A673 (cell line): ENCODE measurements at regions of chr19 and their contacts with region 1.

Region 1: DNA sequence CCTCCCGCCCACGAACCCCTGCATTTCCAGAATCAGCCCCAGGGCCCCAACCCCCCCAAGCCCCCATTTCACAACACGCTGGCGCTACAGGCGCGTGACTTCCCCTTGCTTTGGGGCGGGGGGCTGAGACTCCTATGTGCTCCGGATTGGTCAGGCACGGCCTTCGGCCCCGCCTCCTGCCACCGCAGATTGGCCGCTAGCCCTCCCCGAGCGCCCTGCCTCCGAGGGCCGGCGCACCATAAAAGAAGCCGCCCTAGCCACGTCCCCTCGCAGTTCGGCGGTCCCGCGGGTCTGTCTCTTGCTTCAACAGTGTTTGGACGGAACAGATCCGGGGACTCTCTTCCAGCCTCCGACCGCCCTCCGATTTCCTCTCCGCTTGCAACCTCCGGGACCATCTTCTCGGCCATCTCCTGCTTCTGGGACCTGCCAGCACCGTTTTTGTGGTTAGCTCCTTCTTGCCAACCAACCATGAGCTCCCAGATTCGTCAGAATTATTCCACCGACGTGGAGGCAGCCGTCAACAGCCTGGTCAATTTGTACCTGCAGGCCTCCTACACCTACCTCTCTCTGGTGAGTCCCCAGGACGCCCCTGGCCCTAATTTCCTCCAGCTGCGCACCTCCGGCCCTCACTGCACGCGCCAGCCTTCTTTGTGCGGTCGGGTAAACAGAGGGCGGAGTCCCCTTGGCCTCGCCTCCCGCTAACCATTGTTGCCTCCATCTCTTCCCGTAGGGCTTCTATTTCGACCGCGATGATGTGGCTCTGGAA is at the start of gene FTL:
- DNase-seq: peak; percentile 97
- H3K4me3 ChIP-seq: peak within 1 kb of the TSS; percentile 77
- H3K27ac ChIP-seq: peak within 1 kb of the TSS; percentile 95
- H3K4me1 ChIP-seq: peaks cover 42% of the 10 kb centered on the region
- H3K27me3 ChIP-seq: no peaks in the 10 kb centered on the region
- CTCF ChIP-seq: no peak
- total RNA-seq, gene FTL: 1,330 and 1,983 TPM in 2 replicates

Region 2: DNA sequence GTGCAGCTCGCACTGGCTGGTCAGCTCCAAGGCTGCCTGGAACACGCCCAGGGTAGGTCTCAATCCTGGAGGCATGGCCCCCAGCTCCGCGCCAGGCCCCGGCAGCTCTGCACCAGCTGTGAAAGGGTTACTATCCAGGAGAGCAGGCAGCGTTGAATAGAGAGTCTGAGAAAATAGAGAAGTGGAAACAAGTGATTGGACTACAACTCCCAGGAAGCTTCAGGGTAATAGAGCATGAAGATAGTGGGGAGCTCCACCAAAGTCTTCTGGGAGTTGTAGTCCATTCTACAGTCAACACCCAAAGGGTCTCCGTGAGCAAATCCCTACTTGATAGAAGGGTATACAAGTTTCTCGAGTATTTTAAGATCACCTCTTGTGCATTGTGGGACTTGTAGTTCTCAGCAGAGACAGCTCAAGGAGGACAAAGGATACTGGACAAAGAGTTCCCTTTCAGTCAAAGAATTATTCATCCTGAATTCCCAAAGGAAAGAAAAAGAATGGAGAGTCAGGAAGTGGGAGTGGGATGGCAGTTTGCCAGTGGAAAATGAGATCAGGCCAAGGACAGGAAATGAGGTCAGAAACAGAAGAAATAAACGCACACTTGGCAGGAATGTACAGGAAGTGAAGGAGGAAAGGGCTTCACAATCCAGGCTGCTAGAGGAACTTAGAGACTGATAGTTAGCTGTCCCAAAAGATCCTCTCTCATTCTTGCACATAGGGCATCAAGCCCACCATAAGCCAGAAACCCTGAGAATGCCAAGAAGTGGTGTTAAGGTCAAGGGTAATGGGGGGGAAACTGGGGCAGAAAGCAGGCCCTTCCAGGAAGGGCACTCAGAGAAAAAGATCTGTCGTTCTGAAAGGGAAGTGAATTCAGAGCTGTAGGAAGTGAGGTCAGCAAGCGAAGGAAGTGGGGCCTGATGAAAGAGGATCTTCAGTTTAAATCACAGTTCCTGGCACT is 240.1 kb before region 1 on chr19:
- CTCF ChIA-PET with region 1: no interaction called
- POLR2A ChIA-PET with region 1: no interaction called
- intact Hi-C with region 1: no loop called
- DNase-seq: peak; percentile 98
- H3K4me3 ChIP-seq: peak overlapping the region; percentile 5
- H3K27ac ChIP-seq: peak overlapping the region; percentile 99
- H3K4me1 ChIP-seq: peaks cover 43% of the 10 kb centered on the region
- H3K27me3 ChIP-seq: no peaks in the 10 kb centered on the region
- CTCF ChIP-seq: no peak

Region 3: DNA sequence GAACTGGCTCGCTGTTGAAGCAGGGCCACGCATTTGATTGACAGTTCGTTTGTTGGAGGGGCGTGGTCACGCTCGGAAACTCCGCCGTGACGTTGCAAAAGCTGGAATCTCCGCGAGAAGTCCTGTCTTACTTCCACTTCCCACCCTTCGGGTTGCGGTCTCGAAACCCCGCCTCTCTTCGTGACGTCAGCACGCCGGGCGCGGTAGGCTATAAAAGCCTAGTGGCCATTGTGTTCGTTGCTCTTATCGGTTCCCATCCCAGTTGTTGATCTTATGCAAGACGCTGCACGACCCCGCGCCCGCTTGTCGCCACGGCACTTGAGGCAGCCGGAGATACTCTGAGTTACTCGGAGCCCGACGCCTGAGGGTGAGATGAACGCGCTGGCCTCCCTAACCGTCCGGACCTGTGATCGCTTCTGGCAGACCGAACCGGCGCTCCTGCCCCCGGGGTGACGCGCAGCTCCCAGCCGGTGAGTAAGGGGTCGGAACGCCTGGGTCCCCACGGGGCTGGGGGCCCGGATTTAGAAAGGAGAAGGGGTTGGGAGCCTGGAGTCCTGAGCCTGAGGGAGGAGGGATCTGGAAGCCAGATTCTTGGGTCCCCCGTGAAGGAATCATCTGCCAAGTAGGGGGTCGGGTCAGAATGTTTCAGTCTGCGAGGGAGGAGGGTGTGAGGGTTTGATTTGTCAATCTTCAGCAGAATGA is 92.9 kb before region 1 on chr19 and contains the start of gene PPP1R15A:
- CTCF ChIA-PET with region 1: no interaction called
- POLR2A ChIA-PET with region 1: no interaction called
- intact Hi-C with region 1: loop called (anchors 10 kb)
- DNase-seq: peak; percentile 98
- H3K4me3 ChIP-seq: peak within 1 kb of the TSS; percentile 91
- H3K27ac ChIP-seq: peak within 1 kb of the TSS; percentile 99
- H3K4me1 ChIP-seq: peaks cover 46% of the 10 kb centered on the region
- H3K27me3 ChIP-seq: no peaks in the 10 kb centered on the region
- CTCF ChIP-seq: no peak
- total RNA-seq, gene PPP1R15A: 27.6 and 41.2 TPM in 2 replicates